ENCODE measurements at regions of chr5 and their contacts with region 1.

Region 1: DNA sequence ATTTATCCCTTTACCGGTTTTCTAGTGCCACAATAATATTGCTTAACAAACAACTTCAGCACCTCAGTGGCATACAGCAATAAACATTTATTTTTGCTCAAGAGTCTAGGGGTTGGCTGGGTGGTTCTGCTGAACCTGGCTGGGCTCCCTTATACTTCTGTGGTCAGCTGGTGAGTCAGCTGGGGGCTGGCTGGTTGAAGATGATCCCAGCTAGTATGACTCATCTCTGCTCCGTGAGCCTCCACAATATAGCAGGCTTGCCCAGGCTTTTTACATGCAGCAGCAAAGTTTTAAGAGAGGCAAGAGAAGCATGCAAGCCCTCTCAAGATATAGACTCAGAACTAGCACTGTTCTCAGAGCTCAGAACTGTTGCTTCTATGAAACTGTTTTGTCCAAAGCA is 523.5 kb upstream of the CLINT1 start:
- DNase-seq: peak; percentile 99
- H3K4me3 Mint-ChIP-seq: no peak overlapping the region
- H3K27ac Mint-ChIP-seq: peak overlapping the region; percentile 82
- H3K4me1 Mint-ChIP-seq: peaks cover 52% of the 10 kb centered on the region
- H3K27me3 Mint-ChIP-seq: no peaks in the 10 kb centered on the region
- CTCF ChIP-seq: no peak

Region 2: DNA sequence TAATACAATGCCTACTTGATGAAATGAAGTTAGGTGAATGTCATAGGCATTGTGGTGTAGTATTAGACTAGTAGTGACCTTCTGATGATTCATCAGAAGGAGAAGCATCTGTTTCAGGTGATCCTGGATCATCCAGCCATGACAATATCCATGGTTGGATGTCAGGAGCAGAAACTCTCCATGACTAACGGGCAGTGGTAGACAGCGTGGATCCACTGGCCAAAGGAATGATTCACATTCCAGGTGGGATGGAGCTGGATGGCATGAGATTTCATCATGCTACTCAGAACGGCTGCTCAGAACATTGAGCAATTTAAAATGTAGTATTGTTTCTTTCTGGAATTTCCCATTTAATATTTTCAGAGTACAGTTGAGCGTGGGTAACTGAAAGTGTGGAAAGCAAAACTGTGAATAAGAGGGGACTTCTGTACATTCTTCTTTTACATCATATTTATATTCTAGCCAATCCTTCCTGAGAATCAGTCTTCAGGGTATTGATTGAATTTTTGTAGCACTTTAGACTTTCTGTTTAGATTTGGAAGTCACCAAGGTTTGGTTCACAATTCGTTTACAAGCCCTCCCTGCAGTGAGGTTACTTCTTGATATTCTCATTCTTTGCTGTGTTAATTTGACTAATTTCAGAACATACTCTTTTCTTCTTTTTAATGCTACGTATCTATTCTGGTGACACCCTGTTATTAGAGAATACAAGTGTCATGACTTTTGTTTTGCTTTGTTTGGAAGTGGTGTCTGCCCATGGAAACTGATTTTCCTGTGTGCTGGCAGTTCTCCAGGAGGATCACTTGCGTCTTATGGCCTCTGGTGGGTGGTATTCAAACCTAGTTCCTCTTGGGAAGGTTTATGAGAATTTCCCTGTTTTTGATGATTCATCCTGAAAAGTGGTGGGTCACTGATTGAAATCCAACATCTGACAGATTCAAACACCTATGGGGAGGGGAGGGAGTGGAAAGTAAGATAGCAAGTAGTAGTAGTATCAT is 511.3 kb before region 1 on chr5:
- CTCF ChIA-PET with region 1: no interaction called
- POLR2A ChIA-PET with region 1: no interaction called
- intact Hi-C with region 1: loop called (anchors 2 kb)
- DNase-seq: peak; percentile 98
- H3K4me3 Mint-ChIP-seq: peak overlapping the region; percentile 65
- H3K27ac Mint-ChIP-seq: peak overlapping the region; percentile 98
- H3K4me1 Mint-ChIP-seq: peaks cover 18% of the 10 kb centered on the region
- H3K27me3 Mint-ChIP-seq: no peaks in the 10 kb centered on the region
- CTCF ChIP-seq: no peak

Region 3: GRCh38 chr5:158054223-158055110 is 328.0 kb before region 1 on chr5:
- CTCF ChIA-PET with region 1: no interaction called
- POLR2A ChIA-PET with region 1: interaction called, 4 read pairs
- intact Hi-C with region 1: loop called (anchors 10 kb)
- DNase-seq: peak; percentile 21
- H3K4me3 Mint-ChIP-seq: peak overlapping the region; percentile 19
- H3K27ac Mint-ChIP-seq: peak overlapping the region; percentile 55
- H3K4me1 Mint-ChIP-seq: peaks cover 55% of the 10 kb centered on the region
- H3K27me3 Mint-ChIP-seq: no peaks in the 10 kb centered on the region
- CTCF ChIP-seq: no peak

Region 4: DNA sequence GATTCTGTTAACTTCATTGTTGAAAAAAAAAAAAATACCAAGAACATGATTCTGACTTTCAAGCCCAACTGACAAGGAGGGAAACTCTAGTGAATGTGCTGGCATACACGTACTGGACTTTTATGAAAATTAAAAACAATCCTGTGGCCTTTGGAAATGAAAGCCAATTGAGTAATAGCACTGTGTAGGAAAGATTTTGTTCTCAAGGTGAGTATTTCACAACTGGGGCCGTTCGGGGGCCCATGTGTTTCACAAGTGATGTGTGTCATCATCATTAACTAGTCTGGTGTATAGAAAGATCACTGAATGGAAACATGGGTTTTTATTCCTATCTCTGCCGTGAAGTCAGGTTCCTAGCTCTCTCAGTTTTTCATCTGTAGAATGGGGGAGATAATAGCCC is 81.5 kb after region 1 on chr5:
- CTCF ChIA-PET with region 1: interaction called, 4 read pairs
- POLR2A ChIA-PET with region 1: no interaction called
- intact Hi-C with region 1: loop called (anchors 2 kb)
- DNase-seq: peak; percentile 98
- H3K4me3 Mint-ChIP-seq: no peak overlapping the region
- H3K27ac Mint-ChIP-seq: peak overlapping the region; percentile 74
- H3K4me1 Mint-ChIP-seq: peaks cover 48% of the 10 kb centered on the region
- H3K27me3 Mint-ChIP-seq: no peaks in the 10 kb centered on the region
- CTCF ChIP-seq: no peak

Region 5: DNA sequence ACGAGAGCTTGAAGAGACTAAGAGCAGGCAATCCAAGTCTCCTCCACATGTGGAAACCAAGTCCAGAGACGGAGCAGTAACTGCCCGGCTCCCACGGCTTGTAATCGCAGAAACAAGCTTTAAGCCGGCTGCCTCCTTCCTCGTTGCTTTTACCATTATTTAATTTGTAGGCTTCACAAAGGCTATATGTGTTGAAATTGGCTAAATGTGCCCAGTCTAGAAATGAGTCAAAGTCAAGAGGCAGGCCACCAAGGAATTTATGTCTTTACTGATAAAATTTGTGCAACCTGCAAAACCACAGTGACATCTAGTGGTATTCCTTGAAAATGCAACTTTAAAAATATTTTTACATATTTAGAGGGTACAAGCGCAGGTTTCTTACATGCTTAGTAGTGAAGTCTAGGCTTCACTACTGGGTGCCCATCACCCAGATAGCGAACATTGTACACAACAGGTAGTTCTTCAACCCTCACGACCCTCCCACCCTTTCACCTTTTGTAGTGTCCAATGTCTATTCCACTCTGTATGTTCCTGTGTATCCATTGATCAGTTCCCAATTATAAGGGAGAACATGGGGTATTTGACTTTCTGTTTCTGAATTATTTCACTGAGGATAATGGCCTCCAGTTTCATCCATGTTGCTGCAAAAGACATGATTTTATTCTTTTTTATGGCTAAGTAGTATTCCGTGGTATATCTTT is 750.7 kb after region 1 on chr5:
- CTCF ChIA-PET with region 1: no interaction called
- POLR2A ChIA-PET with region 1: no interaction called
- intact Hi-C with region 1: loop called (anchors 10 kb)
- DNase-seq: peak; percentile 80
- H3K4me3 Mint-ChIP-seq: no peak overlapping the region
- H3K27ac Mint-ChIP-seq: no peak overlapping the region
- H3K4me1 Mint-ChIP-seq: peaks cover 7% of the 10 kb centered on the region
- H3K27me3 Mint-ChIP-seq: no peaks in the 10 kb centered on the region
- CTCF ChIP-seq: peak; percentile 92

Measured in MCF 10A (cell line).